ENCODE measurements at regions of chr9 and their contacts with region 1.

Region 1: GRCh38 chr9:81035171-81035570 is 654.2 kb downstream of the TLE1 start:
- DNase-seq: no peak
- H3K4me3 ChIP-seq: no peak overlapping the region
- H3K27ac ChIP-seq: no peak overlapping the region
- H3K4me1 ChIP-seq: no peaks in the 10 kb centered on the region
- H3K27me3 ChIP-seq: no peaks in the 10 kb centered on the region
- CTCF ChIP-seq: no peak
- POLR2A ChIP-seq: no peak

Region 2: DNA sequence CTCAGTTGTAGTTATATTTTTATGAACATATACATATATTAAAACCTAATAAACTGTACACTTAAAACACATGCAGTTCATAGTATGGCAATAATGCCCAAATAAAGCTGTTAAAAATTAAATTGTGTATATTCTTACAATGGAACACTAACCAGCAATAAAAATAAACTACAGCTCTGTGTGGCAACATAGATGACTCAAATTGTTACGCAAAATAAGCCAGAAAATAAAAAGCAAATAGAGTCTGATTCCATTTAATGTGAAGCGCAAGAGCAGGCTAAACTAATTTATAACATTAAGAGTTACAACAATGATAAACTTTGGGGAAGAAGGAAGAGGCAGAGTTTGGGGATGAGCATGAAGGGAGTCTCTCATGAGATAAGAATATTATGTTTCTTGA is 56.9 kb after region 1 on chr9:
- intact Hi-C with region 1: no loop called
- DNase-seq: no peak
- H3K4me3 ChIP-seq: no peak overlapping the region
- H3K27ac ChIP-seq: no peak overlapping the region
- H3K4me1 ChIP-seq: no peaks in the 10 kb centered on the region
- H3K27me3 ChIP-seq: no peaks in the 10 kb centered on the region
- CTCF ChIP-seq: no peak
- POLR2A ChIP-seq: no peak

Region 3: GRCh38 chr9:81759668-81760215 is 724.6 kb after region 1 on chr9:
- intact Hi-C with region 1: loop called (anchors 5 kb)
- DNase-seq: no peak
- H3K4me3 ChIP-seq: no peak overlapping the region
- H3K27ac ChIP-seq: no peak overlapping the region
- H3K4me1 ChIP-seq: no peaks in the 10 kb centered on the region
- H3K27me3 ChIP-seq: no peaks in the 10 kb centered on the region
- CTCF ChIP-seq: no peak
- POLR2A ChIP-seq: no peak